Activated B cell treated with CpG ODN at 0.5 μM for 24 hours (primary cell): ENCODE measurements at regions of chr18 and their contacts with region 1.

Region 1: DNA sequence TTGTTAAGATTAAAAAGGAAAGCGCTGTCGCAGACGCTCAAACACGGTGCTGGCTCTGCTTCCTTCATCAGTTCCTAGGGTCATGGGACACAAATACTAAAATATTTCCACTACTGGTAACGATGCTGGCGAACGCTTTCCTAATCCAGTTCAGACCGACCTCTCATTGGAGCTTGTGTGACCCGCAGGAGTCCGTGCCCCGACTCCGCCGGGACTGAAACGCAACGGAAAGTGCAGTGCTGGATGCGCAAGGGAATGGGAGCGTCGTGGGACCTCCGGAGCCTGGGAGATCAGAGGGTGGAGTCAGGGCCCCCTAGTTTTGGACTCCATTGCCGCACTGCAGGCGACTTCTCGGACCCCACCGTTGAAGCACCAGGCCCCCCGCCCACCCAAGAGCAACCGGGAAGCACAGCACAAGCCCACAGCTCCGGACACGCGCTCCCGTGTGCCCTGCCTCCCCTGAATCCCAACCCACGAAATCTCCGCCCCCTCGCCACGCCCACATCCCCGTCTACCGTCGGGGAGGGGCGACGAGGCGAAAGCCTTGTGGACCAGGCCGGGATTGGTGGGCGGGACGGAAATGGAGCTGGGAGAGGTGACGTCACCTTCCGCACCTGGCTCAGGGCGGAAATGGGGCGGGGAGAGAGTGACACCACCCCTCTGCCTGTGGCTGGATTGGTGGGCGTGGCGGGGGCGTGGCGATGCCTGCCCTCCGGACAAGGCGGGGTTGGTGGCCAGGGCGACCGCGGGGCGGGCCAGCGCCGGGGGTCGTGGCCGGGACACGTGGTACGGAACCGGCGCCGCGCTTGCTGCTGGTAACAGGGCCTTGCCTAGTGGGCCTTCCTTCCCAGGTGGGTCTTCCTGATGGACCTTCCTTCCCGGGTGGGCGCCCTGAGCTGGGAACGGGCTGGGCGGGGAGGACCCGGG is at the start of gene CNDP2:
- DNase-seq: peak; percentile 99
- ATAC-seq: peak; percentile 81
- H3K4me3 Mint-ChIP-seq: peak within 1 kb of the TSS; percentile 99
- H3K27ac Mint-ChIP-seq: peak within 1 kb of the TSS; percentile 98
- H3K4me1 Mint-ChIP-seq: peaks cover 46% of the 10 kb centered on the region
- H3K27me3 Mint-ChIP-seq: no peaks in the 10 kb centered on the region
- CTCF ChIP-seq: no peak
- total RNA-seq, gene CNDP2: 193 and 208 TPM in 2 replicates

Region 2: DNA sequence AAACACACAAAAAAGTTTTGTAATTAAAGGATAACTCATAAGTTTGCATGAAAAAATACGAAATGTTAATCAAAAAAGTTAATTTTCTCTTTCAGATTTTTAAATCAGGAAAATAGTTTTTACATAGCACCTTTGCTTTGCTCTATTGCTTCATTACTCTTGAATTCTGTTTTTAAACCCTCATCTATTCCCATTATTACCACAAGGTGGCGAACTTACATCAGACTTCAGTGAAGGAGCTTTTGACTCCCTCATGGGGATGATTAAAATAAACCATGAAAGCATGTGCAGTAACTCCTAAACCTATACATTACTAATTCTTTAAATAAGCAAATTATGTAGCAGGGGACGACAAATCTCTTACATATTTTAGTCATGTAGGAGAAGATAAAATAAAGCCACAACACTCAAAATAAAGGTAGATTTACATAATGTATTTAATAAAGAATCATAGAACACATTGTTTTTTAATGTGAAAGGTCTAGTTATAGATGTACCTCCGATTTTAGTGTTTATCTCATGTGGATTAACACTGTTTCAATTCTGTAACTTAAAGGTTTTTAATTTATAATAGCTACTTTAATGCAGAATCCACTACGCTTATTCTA is 1733.2 kb before region 1 on chr18:
- CTCF ChIA-PET with region 1: no interaction called
- POLR2A ChIA-PET with region 1: no interaction called
- intact Hi-C with region 1: loop called (anchors 10 kb)
- DNase-seq: no peak
- ATAC-seq: peak; percentile 52
- H3K4me3 Mint-ChIP-seq: no peak overlapping the region
- H3K27ac Mint-ChIP-seq: no peak overlapping the region
- H3K4me1 Mint-ChIP-seq: no peaks in the 10 kb centered on the region
- H3K27me3 Mint-ChIP-seq: no peaks in the 10 kb centered on the region
- CTCF ChIP-seq: peak; percentile 27

Region 3: DNA sequence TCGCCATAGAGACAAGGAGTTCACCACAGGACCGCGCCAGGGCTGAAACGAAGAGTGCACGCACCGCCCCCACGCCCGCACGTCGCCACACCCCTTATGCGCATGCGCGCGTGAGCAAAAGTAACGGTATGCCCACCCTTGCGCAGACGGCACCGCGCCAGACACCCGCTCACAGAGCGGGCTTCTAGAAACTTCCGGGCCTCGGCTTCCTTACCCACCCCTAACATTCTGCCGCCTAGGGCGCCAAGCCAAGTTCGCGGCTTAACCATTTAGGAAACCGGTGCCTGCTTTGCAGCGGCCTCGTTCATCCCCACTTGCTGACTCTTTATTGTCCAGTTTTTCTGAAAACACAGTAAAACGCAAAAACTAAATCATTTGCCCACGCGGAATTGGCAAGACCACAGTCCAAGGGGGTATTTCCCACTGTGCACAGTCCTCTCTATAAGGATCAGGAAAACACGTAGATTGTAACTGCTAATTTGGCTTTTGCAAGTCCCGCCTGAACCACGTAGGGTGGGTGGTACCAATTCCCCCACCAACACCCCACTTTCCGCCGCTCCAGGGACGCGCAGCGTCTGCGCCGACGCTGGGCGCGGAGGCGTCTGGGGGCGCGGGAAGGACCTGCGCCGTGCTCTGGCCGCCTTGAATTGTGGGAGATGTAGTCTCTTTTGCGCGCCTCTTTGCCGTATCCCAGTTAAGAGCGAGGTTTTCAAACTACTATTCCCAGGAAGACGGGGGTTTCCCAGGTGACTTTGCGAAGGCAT is 347.9 kb before region 1 on chr18 and contains the starts of genes FBXO15 and TIMM21:
- CTCF ChIA-PET with region 1: no interaction called
- POLR2A ChIA-PET with region 1: interaction called, 5 read pairs
- intact Hi-C with region 1: loop called (anchors 1 kb)
- DNase-seq: peak; percentile 96
- ATAC-seq: peak; percentile 85
- H3K4me3 Mint-ChIP-seq: peak within 1 kb of the TSS; percentile 97
- H3K27ac Mint-ChIP-seq: peak within 1 kb of the TSS; percentile 99
- H3K4me1 Mint-ChIP-seq: peaks cover 48% of the 10 kb centered on the region
- H3K27me3 Mint-ChIP-seq: peaks cover 1% of the 10 kb centered on the region
- CTCF ChIP-seq: no peak
- total RNA-seq, gene FBXO15: 0.69 and 0.98 TPM in 2 replicates
- total RNA-seq, gene TIMM21: 23.3 and 27.0 TPM in 2 replicates

Region 4: GRCh38 chr18:74291771-74292540 is 203.9 kb before region 1 on chr18 and contains the start of gene CYB5A:
- CTCF ChIA-PET with region 1: no interaction called
- POLR2A ChIA-PET with region 1: no interaction called
- intact Hi-C with region 1: loop called (anchors 1 kb)
- DNase-seq: peak; percentile 99
- ATAC-seq: peak; percentile 97
- H3K4me3 Mint-ChIP-seq: peak within 1 kb of the TSS; percentile 97
- H3K27ac Mint-ChIP-seq: peak within 1 kb of the TSS; percentile 91
- H3K4me1 Mint-ChIP-seq: peaks cover 49% of the 10 kb centered on the region
- H3K27me3 Mint-ChIP-seq: no peaks in the 10 kb centered on the region
- CTCF ChIP-seq: no peak
- total RNA-seq, gene CYB5A: 46.2 and 47.2 TPM in 2 replicates

Region 5: DNA sequence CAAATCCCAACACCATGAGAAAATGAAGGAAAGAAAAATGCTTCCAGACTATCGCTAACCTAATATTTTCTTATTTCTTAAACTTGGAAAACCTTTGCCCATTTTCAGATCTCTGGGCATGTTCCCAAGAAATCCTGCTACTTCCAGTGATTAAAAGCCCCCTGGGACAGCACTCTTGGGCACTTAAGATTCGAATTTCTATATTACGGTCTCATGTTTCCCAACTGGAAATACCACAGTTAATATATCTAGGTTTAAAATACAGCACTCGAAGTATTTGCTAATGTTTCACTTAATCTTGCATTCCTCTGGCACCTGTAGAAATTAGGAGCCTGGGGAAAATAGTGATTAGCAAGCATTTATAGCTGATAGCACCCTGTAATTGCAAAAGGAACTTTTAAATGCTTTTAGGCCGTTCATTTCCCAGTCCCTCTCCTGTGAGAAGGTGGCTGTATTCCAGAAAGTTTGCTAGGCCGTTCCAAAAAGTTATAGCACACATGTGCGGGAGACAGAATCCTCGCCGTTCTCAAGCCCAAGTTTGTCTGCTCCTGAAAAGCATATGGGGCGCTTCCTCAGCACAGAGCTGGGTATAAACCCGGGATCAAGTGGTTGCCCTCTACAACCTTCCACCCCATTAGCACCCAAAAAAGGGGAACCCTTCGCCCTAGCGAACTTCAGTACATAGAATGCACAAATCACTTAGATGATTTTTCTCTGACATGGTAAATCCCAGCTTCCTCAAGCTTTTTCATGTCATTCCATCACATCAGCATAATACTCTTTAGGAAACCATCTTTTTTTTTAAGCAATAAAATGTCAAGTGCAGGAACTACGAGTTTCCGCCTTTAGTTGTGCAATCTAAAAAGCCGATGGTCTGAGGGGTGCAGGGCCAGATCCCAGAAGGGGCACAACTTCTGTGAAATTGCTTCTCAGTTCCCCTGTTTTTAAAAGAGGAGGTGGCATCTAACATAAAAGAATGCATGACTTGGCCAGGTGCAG is 99.4 kb before region 1 on chr18:
- CTCF ChIA-PET with region 1: no interaction called
- POLR2A ChIA-PET with region 1: no interaction called
- intact Hi-C with region 1: no loop called
- DNase-seq: no peak
- ATAC-seq: no peak
- H3K4me3 Mint-ChIP-seq: no peak overlapping the region
- H3K27ac Mint-ChIP-seq: no peak overlapping the region
- H3K4me1 Mint-ChIP-seq: no peaks in the 10 kb centered on the region
- H3K27me3 Mint-ChIP-seq: peaks cover 39% of the 10 kb centered on the region
- CTCF ChIP-seq: no peak

Region 6: GRCh38 chr18:74407888-74408287 is 88.0 kb before region 1 on chr18:
- CTCF ChIA-PET with region 1: interaction called, 3 read pairs
- POLR2A ChIA-PET with region 1: no interaction called
- intact Hi-C with region 1: loop called (anchors 5 kb)
- DNase-seq: no peak
- ATAC-seq: no peak
- H3K4me3 Mint-ChIP-seq: peak overlapping the region; percentile 67
- H3K27ac Mint-ChIP-seq: peak overlapping the region; percentile 88
- H3K4me1 Mint-ChIP-seq: peaks cover 33% of the 10 kb centered on the region
- H3K27me3 Mint-ChIP-seq: peaks cover 6% of the 10 kb centered on the region
- CTCF ChIP-seq: no peak

Region 7: GRCh38 chr18:74597662-74598349 is 102.0 kb after region 1 on chr18 and contains the start of gene ZNF407:
- CTCF ChIA-PET with region 1: no interaction called
- POLR2A ChIA-PET with region 1: interaction called, 17 read pairs
- intact Hi-C with region 1: loop called (anchors 1 kb)
- DNase-seq: peak; percentile 85
- ATAC-seq: peak; percentile 84
- H3K4me3 Mint-ChIP-seq: peak within 1 kb of the TSS; percentile 96
- H3K27ac Mint-ChIP-seq: peak within 1 kb of the TSS; percentile 98
- H3K4me1 Mint-ChIP-seq: peaks cover 49% of the 10 kb centered on the region
- H3K27me3 Mint-ChIP-seq: no peaks in the 10 kb centered on the region
- CTCF ChIP-seq: no peak
- total RNA-seq, gene ZNF407: 24.0 and 26.7 TPM in 2 replicates